WTC11 (cell line): ENCODE measurements at regions of chr5 and their contacts with region 1.

Region 1: DNA sequence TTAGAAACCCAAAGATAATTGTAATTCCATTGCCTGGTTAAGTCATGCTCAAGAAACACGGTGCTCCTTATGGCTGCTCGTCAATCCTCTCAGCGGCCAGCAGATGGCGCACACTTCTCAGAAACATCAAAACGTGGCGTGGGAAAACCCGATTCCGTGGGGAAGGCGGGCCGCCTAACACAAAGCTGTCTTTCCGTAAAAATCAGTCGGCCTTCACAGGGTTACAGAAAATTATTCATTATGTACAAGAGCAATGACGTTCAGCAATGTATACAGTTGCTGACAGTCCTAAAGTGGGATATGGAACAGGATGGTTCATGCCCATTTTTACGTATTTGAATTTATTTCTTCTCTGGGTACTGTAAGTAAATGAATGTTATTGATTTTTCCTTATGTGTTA is 83.5 kb downstream of the PDE4D start:
- DNase-seq: peak; percentile 68
- ATAC-seq: peak; percentile 66
- H3K4me3 Mint-ChIP-seq: peak overlapping the region; percentile 65
- H3K27ac Mint-ChIP-seq: no peak overlapping the region
- H3K4me1 Mint-ChIP-seq: 0 out of 2 replicates have a peak, but pooled peaks cover 4% of the 10 kb centered on the region
- H3K27me3 Mint-ChIP-seq: peaks cover 3% of the 10 kb centered on the region; the same call in 1 of the 2 replicates
- CTCF ChIP-seq: peak; percentile 86

Region 2: DNA sequence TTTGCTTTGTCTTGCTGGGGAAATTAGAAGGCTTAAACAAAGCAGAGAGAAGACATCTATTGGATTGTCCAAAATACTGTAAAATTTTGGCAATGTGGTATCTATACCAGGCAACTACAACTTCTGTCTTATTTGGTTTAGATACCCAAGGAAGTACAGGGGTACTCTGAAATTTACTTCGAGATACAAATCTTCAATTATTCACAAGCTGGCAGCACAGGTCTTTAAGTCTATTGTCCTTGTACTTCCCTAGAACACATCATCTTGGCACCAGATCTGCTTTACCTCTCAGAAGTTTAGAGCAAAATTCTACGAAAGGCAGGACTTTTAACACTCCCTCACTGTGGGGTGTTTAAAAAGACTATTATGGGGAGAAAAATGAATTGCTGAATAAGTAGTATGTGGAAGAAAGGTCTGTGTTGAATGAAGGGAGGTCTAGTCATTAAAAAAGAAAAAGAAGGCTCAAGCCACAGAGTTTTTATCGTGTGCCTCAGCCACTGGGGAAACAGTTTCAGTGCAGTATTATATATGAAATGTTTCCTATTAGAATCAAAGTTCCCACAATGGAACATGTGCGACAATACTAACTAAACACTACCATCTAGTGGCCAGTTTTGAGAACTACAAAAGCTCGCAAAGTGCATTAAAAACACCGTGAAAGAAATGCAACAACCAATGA is 10.2 kb before region 1 on chr5:
- CTCF ChIA-PET with region 1: interaction called, 19 read pairs
- POLR2A ChIA-PET with region 1: no interaction called
- DNase-seq: no peak
- ATAC-seq: peak; percentile 61
- H3K4me3 Mint-ChIP-seq: no peak overlapping the region
- H3K27ac Mint-ChIP-seq: no peak overlapping the region
- H3K4me1 Mint-ChIP-seq: peaks cover 15% of the 10 kb centered on the region
- H3K27me3 Mint-ChIP-seq: no peaks in the 10 kb centered on the region
- CTCF ChIP-seq: no peak; the same call in none of the 2 replicates

Region 3: GRCh38 chr5:59873113-59873512 is 63.1 kb after region 1 on chr5:
- CTCF ChIA-PET with region 1: no interaction called
- POLR2A ChIA-PET with region 1: no interaction called
- DNase-seq: no peak
- ATAC-seq: no peak
- H3K4me3 Mint-ChIP-seq: no peak overlapping the region
- H3K27ac Mint-ChIP-seq: no peak overlapping the region
- H3K4me1 Mint-ChIP-seq: peaks cover 19% of the 10 kb centered on the region
- H3K27me3 Mint-ChIP-seq: no peaks in the 10 kb centered on the region
- CTCF ChIP-seq: no peak

Region 4: DNA sequence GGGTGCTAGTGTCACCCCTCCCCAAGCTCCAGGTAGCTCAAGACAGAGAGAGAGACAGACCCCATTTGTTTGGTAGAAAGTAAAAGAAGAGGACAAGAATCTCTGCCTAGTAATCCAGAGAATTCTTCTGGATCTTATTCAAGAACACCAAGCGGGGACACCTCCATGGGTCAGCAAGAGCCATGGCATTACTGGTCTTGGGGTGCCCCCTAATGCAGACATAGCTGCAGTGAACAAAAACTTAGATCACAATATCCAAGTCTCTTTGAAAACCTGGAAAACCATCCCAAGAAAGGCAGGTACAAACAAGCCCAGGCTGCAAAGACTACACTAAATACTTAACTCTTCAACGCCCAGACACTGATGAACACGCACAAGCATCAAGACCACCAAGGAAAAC is 113.4 kb after region 1 on chr5:
- CTCF ChIA-PET with region 1: interaction called, 17 read pairs
- POLR2A ChIA-PET with region 1: no interaction called
- DNase-seq: peak; percentile 23
- ATAC-seq: peak; percentile 66
- H3K4me3 Mint-ChIP-seq: no peak overlapping the region
- H3K27ac Mint-ChIP-seq: no peak overlapping the region
- H3K4me1 Mint-ChIP-seq: peaks cover 19% of the 10 kb centered on the region
- H3K27me3 Mint-ChIP-seq: no peaks in the 10 kb centered on the region; the same call in 1 of the 2 replicates
- CTCF ChIP-seq: no peak

Region 5: GRCh38 chr5:60287174-60287771 is 477.2 kb after region 1 on chr5:
- CTCF ChIA-PET with region 1: interaction called, 36 read pairs
- POLR2A ChIA-PET with region 1: no interaction called
- DNase-seq: peak; percentile 73
- ATAC-seq: peak; percentile 100
- H3K4me3 Mint-ChIP-seq: no peak overlapping the region
- H3K27ac Mint-ChIP-seq: no peak overlapping the region
- H3K4me1 Mint-ChIP-seq: no peaks in the 10 kb centered on the region
- H3K27me3 Mint-ChIP-seq: no peaks in the 10 kb centered on the region; the same call in 1 of the 2 replicates
- CTCF ChIP-seq: peak; percentile 89